ENCODE measurements at regions of chrX and their contacts with region 1.

Region 1: DNA sequence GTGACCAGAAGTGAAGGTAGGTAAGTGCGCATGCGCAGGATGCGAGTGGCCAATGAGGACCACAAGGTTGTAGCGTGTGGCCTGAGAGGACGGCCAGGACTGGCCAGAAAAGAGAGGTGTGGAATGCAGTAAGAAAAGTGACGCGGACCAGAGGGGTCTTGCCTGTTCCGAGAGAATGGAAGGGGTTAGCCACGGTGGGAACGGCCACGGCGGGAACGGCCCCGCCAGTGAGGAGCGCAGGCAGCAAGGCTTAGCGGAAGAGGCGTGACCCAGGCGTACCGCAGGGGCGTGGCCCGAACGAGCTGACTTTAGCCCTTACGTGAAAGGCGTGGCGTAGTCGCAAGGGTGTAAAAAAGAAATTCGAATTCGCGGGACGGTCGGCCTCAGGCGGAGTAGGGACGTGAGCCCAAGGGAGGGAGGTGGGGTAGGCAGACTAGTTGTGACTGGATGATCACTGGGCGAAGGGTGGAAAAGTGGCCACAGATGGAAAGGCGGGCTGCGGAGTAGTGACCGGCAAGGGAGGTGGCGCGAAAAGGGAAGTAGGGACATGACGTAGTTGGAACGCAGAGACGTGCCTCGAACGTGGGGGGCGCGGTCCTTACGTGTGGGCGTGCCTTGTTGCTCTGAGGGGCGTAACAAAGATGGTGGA is 10.4 kb upstream of the CLTRN start:
- DNase-seq: peak; percentile 85
- H3K4me3 Mint-ChIP-seq: no peak overlapping the region
- H3K27ac Mint-ChIP-seq: no peak overlapping the region
- H3K4me1 Mint-ChIP-seq: peaks cover 21% of the 10 kb centered on the region
- H3K27me3 Mint-ChIP-seq: no peaks in the 10 kb centered on the region

Region 2: GRCh38 chrX:15524417-15524816 is 150.5 kb before region 1 on chrX:
- CTCF ChIA-PET with region 1: no interaction called
- intact Hi-C with region 1: no loop called
- DNase-seq: no peak
- H3K4me3 Mint-ChIP-seq: no peak overlapping the region
- H3K27ac Mint-ChIP-seq: no peak overlapping the region
- H3K4me1 Mint-ChIP-seq: no peaks in the 10 kb centered on the region
- H3K27me3 Mint-ChIP-seq: peaks cover 7% of the 10 kb centered on the region

Region 3: GRCh38 chrX:15633276-15633868 is 41.6 kb before region 1 on chrX:
- CTCF ChIA-PET with region 1: no interaction called
- intact Hi-C with region 1: no loop called
- DNase-seq: no peak
- H3K4me3 Mint-ChIP-seq: no peak overlapping the region
- H3K27ac Mint-ChIP-seq: no peak overlapping the region
- H3K4me1 Mint-ChIP-seq: no peaks in the 10 kb centered on the region
- H3K27me3 Mint-ChIP-seq: peaks cover 2% of the 10 kb centered on the region

Region 4: GRCh38 chrX:15737960-15738902 is 63.3 kb after region 1 on chrX and contains the start of gene CA5B:
- CTCF ChIA-PET with region 1: no interaction called
- intact Hi-C with region 1: loop called (anchors 1 kb)
- DNase-seq: peak; percentile 96
- H3K4me3 Mint-ChIP-seq: peak within 1 kb of the TSS; percentile 83
- H3K27ac Mint-ChIP-seq: no peak within 1 kb of the TSS
- H3K4me1 Mint-ChIP-seq: peaks cover 37% of the 10 kb centered on the region
- H3K27me3 Mint-ChIP-seq: no peaks in the 10 kb centered on the region
- total RNA-seq, gene CA5B: 7.0 to 9.5 TPM

Region 5: DNA sequence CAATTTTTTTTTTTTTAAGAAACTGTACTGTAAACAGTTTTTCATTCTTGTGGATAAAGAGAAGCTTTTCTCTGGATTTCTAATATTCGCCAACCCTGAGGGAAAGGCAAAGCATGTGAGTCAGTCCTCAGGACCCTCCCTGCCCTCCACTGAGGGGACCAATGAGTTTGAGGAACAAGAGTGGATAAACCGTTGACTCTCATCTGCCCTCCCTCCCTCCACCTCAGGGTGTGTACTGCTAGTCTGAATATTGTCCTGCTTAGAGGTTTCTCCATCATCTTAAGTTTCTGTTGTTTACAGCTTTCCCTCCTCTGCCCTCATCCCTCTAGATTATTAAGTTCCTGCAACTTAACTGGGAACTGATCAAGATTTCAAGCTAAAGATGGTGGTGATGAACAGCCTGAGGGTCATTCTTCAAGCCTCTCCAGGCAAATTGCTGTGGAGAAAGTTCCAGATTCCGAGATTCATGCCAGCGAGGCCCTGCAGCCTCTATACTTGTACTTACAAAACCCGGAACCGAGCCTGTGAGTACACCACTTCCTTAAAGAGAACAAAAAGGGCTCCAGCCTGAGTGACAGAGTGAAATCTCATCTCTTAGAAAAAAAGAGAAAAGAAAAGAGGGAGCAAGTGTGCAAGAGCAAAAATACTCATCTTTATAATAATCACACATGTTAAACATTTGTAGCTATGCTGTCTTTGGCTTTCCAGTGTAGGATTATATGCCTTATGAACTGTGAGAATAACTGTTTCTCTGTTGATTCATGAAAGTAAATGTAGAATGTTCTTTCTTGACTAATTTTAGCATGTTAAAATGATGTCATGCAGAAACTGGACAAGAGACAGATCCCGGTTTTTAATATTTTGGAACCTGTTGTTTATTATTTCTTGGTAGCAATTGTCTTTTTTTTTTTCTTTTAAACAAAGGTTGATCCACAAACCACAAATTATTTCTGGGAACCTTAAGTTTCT is 75.0 kb after region 1 on chrX:
- CTCF ChIA-PET with region 1: interaction called, 4 read pairs
- intact Hi-C with region 1: loop called (anchors 1 kb)
- DNase-seq: peak; percentile 31
- H3K4me3 Mint-ChIP-seq: peak overlapping the region; percentile 47
- H3K27ac Mint-ChIP-seq: peak overlapping the region; percentile 92
- H3K4me1 Mint-ChIP-seq: peaks cover 68% of the 10 kb centered on the region
- H3K27me3 Mint-ChIP-seq: no peaks in the 10 kb centered on the region

Region 6: GRCh38 chrX:15988661-15989603 is 314.0 kb after region 1 on chrX:
- CTCF ChIA-PET with region 1: no interaction called
- intact Hi-C with region 1: loop called (anchors 5 kb)
- DNase-seq: no peak
- H3K4me3 Mint-ChIP-seq: no peak overlapping the region
- H3K27ac Mint-ChIP-seq: no peak overlapping the region
- H3K4me1 Mint-ChIP-seq: peaks cover 9% of the 10 kb centered on the region
- H3K27me3 Mint-ChIP-seq: peaks cover 9% of the 10 kb centered on the region